ENCODE measurements at regions of chr9 and their contacts with region 1.

Region 1: DNA sequence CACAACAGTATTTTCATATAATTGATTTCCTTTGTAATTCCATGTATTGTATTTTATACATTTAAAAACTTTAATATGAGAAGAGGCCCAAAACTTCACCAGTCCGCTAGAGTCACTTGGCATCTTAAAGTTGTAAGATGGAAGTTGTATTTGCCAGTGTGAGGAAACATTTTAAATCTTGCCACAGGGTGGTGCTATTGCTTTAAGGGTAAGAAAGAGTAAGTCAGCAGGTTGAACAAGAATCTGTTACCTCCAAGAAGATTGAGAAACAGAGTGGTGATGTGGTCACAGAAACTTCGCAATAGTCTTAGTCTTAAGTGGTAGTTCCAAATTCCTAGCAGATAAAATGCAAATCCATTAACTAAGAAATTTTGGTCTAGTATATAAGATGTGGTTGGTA is 39.8 kb upstream of the RANBP6 start:
- DNase-seq: peak; percentile 58
- ATAC-seq: peak; percentile 84
- H3K4me3 ChIP-seq: no peak overlapping the region
- H3K27ac ChIP-seq: no peak overlapping the region
- H3K4me1 ChIP-seq: peaks cover 19% of the 10 kb centered on the region
- H3K27me3 ChIP-seq: no peaks in the 10 kb centered on the region
- CTCF ChIP-seq: peak; percentile 51 to 79 (median 64); a peak in 5 of 6 replicates
- EP300 ChIP-seq: no peak
- POLR2A ChIP-seq: no peak
- RAD21 ChIP-seq: peak; percentile 96

Region 2: DNA sequence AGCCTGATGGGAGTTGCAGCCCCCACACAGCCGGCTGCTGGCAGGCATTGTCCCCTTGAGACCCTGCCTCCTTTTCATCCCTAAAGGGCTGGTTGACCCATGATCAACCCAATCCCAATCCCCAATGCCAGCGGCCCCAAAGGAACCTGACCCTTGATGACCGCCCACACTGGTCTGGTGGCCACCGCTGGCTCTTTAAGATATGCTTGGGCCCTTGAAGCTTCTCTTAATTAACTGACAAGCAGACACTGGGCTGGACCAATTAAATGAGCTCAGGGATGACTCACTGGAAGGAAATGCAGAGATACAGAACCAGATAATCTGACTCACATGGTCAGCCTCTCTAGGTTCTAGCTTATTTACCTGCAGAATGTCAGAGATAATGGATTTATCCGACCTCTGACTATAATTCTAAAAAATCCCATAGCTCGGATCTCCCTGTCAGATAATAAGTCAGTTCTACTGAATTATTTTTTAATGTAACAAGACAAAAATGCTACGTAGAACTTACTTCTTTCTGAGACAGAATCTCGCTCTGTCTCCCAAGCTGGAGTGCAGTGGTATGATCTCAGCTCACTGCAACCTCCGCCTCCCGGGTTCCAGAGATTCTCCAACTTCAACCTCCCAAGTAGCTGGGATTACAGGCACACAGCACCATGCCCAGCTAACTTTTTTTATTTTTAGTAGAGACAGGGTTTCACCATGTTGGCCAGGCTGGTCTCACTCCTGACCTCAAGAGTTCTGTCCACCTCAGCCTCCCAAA is 175.6 kb before region 1 on chr9:
- CTCF ChIA-PET with region 1: interaction called, 288 read pairs
- POLR2A ChIA-PET with region 1: no interaction called
- RAD21 ChIA-PET with region 1: interaction called, 121 read pairs
- SMC1A ChIA-PET with region 1: interaction called, 174 read pairs
- in situ Hi-C with region 1: no loop called
- intact Hi-C with region 1: no loop called
- DNase-seq: no peak
- ATAC-seq: no peak
- H3K4me3 ChIP-seq: no peak overlapping the region
- H3K27ac ChIP-seq: no peak overlapping the region
- H3K4me1 ChIP-seq: peaks cover 5% of the 10 kb centered on the region; the same call in 1 of the 2 replicates
- H3K27me3 ChIP-seq: no peaks in the 10 kb centered on the region
- CTCF ChIP-seq: no peak
- EP300 ChIP-seq: no peak
- POLR2A ChIP-seq: no peak
- RAD21 ChIP-seq: no peak

Region 3: DNA sequence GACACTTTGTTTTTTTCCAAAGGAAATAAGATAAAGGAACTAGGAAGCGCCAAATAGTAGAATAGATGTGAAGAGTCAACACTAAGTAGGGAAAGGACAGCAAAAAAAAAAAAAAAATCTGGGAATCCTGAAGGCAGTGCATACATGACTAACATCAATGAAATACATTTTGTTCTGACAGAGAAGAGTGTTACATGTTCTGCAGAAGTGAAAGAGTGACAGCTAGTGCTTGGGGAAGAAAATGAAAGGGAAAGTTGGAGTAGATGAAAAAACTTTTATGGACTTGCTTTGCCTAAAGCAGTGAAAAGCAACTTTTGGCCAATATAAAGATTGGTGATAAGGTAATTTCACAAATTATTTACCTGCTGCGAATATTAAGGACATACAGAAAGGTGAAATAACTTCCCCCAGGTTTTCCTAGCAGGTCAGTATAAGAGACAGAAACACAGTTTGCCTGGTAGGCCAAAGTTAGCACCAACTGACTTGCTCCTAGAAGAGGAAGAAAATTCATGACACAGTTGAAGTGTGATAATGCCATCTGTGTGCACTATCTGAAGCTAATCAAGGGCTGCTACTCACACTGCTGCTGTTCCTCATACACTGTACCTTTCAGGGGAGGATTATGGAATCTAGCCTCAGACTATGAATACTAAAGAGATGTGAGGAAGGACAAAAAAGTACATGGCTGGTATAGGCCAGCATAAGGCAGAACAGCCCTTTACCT is 78.4 kb before region 1 on chr9:
- CTCF ChIA-PET with region 1: interaction called, 35 read pairs
- POLR2A ChIA-PET with region 1: no interaction called
- RAD21 ChIA-PET with region 1: interaction called, 18 read pairs
- SMC1A ChIA-PET with region 1: interaction called, 20 read pairs
- in situ Hi-C with region 1: no loop called
- intact Hi-C with region 1: no loop called
- DNase-seq: peak; percentile 11
- ATAC-seq: peak; percentile 88
- H3K4me3 ChIP-seq: no peak overlapping the region
- H3K27ac ChIP-seq: peak overlapping the region; percentile 57
- H3K4me1 ChIP-seq: peaks cover 4% of the 10 kb centered on the region; the same call in 1 of the 2 replicates
- H3K27me3 ChIP-seq: no peaks in the 10 kb centered on the region
- CTCF ChIP-seq: peak; percentile 32 to 68 (median 36); a peak in 4 of 6 replicates
- EP300 ChIP-seq: no peak
- POLR2A ChIP-seq: no peak
- RAD21 ChIP-seq: peak; percentile 70

Region 4: GRCh38 chr9:6008169-6008979 is 46.8 kb before region 1 on chr9:
- CTCF ChIA-PET with region 1: interaction called, 11 read pairs
- POLR2A ChIA-PET with region 1: no interaction called
- RAD21 ChIA-PET with region 1: interaction called, 26 read pairs
- SMC1A ChIA-PET with region 1: interaction called, 6 read pairs
- in situ Hi-C with region 1: no loop called
- intact Hi-C with region 1: no loop called
- DNase-seq: peak; percentile 88
- ATAC-seq: peak; percentile 74
- H3K4me3 ChIP-seq: peak overlapping the region; percentile 82
- H3K27ac ChIP-seq: peak overlapping the region; percentile 66
- H3K4me1 ChIP-seq: peaks cover 12% of the 10 kb centered on the region
- H3K27me3 ChIP-seq: no peaks in the 10 kb centered on the region
- CTCF ChIP-seq: no peak
- EP300 ChIP-seq: no peak
- POLR2A ChIP-seq: peak; percentile 55
- RAD21 ChIP-seq: no peak

Region 5: DNA sequence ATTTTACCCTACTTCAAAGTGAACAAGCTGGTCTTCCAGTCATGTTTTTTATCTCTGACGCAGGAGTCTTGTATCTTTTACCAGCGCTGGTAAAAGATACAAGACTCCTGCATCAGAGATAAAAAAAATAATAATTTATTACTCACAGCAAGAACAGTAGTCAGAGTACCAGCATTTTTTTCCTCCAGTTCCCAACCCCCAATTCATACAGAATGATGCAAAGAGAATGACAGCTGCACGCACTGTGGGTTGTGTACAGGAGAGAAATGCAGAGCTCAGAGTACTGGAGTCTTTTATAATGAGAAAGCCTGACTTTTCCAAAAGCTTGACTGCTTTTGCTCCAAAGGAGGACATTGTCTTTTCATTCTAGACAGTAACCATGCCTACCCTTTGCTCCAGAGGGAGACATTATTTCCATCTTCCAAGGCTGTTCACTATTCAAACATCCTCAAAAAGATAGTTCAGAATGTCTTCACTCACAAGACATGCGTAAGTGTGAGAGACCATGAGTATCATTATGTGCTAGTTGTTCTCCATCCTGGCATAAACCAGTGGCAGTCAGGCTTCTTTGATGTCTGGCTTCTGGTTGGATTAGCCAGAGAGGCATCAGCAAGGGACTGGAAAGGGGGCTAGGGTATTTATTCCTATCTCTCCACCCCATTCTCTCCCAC is 25.5 kb before region 1 on chr9:
- CTCF ChIA-PET with region 1: interaction called, 33 read pairs
- POLR2A ChIA-PET with region 1: no interaction called
- RAD21 ChIA-PET with region 1: interaction called, 11 read pairs
- SMC1A ChIA-PET with region 1: interaction called, 3 read pairs
- in situ Hi-C with region 1: no loop called
- intact Hi-C with region 1: no loop called
- DNase-seq: no peak
- ATAC-seq: no peak; the same call in 1 of the 3 replicates
- H3K4me3 ChIP-seq: no peak overlapping the region
- H3K27ac ChIP-seq: no peak overlapping the region
- H3K4me1 ChIP-seq: no peaks in the 10 kb centered on the region
- H3K27me3 ChIP-seq: no peaks in the 10 kb centered on the region
- CTCF ChIP-seq: no peak
- EP300 ChIP-seq: no peak
- POLR2A ChIP-seq: no peak
- RAD21 ChIP-seq: no peak

Region 6: DNA sequence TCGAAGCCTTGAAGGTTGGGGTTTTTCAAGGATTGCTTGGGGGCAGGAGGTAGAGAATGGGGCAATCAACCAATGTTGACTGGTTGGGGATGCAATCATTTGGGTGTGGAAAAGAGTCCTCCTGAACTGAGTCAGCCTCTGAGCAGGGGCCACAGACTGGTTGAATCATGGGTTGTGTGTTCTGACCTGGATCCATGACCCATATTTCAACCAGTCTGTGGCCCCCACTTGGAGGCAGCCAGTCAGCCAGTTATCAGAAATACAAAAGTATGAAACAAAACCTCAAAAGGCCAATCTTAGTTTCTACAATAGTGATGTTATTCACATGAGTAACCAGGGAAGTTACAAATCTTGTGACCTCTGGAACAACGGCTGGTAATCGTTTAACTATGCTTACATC is 41.6 kb after region 1 on chr9:
- CTCF ChIA-PET with region 1: no interaction called
- POLR2A ChIA-PET with region 1: no interaction called
- RAD21 ChIA-PET with region 1: no interaction called
- SMC1A ChIA-PET with region 1: no interaction called
- in situ Hi-C with region 1: no loop called
- intact Hi-C with region 1: no loop called
- DNase-seq: no peak
- ATAC-seq: peak; percentile 47; the same call in 2 of the 3 replicates
- H3K4me3 ChIP-seq: no peak overlapping the region
- H3K27ac ChIP-seq: no peak overlapping the region
- H3K4me1 ChIP-seq: no peaks in the 10 kb centered on the region
- H3K27me3 ChIP-seq: no peaks in the 10 kb centered on the region
- CTCF ChIP-seq: no peak
- EP300 ChIP-seq: no peak
- POLR2A ChIP-seq: no peak
- RAD21 ChIP-seq: no peak

Region 7: DNA sequence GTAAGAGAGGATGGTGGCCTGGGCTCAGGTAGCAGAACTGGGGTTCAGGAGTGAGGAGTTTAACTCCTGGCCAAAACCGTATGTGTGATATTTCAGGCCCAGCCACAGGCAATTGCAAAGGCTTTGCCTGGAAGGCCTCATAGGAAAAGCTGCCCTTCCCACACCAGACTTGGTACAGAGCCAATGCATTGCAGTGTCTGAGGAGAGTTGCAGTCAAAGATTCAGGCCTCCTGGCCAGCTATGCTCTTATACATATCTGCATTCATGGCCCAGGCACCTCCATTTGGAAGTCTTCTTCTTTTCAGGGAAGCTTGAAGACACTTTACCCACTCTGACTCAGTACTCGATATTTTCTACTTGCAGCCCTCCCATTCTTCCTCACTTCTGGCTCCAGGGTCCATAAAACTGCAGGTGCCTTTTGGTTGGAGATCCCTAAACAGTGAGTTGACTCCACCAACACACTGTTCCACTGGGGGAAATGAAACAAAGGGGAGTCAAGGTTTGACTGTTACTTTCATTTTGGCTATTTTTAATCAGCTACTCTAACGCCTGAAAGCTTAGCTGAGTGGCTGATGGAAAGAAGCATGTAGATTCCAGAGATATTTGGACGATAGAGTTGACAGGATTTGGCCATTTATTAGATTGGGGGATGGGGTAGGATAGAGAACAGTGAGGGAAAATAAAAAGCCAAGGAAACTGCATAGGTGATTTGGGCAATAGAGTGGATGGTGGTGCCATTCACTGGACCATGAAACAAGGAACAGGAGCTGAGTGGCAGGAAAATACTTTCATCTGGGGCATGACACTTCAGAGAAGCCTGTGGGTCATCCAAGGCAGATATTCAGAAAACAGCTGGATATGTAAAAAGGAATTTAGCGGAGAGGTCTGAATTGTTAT is 129.8 kb after region 1 on chr9:
- CTCF ChIA-PET with region 1: interaction called, 5 read pairs
- POLR2A ChIA-PET with region 1: no interaction called
- RAD21 ChIA-PET with region 1: no interaction called
- SMC1A ChIA-PET with region 1: interaction called, 4 read pairs
- in situ Hi-C with region 1: no loop called
- intact Hi-C with region 1: loop called (anchors 5 kb)
- DNase-seq: peak; percentile 61
- ATAC-seq: peak; percentile 97
- H3K4me3 ChIP-seq: peak overlapping the region; percentile 46; the same call in 1 of the 2 replicates
- H3K27ac ChIP-seq: peak overlapping the region; percentile 48
- H3K4me1 ChIP-seq: peaks cover 33% of the 10 kb centered on the region
- H3K27me3 ChIP-seq: no peaks in the 10 kb centered on the region
- CTCF ChIP-seq: no peak
- EP300 ChIP-seq: peak in 1 of 2 experiments; percentile 82; a peak in 1 of 4 replicates
- POLR2A ChIP-seq: no peak
- RAD21 ChIP-seq: peak; percentile 8; the same call in 1 of the 2 replicates

Region 8: GRCh38 chr9:6214434-6214833 is 159.2 kb after region 1 on chr9:
- CTCF ChIA-PET with region 1: no interaction called
- POLR2A ChIA-PET with region 1: no interaction called
- RAD21 ChIA-PET with region 1: no interaction called
- SMC1A ChIA-PET with region 1: no interaction called
- in situ Hi-C with region 1: no loop called
- intact Hi-C with region 1: no loop called
- DNase-seq: no peak
- ATAC-seq: no peak
- H3K4me3 ChIP-seq: no peak overlapping the region
- H3K27ac ChIP-seq: no peak overlapping the region
- H3K4me1 ChIP-seq: no peaks in the 10 kb centered on the region
- H3K27me3 ChIP-seq: no peaks in the 10 kb centered on the region
- CTCF ChIP-seq: no peak
- EP300 ChIP-seq: no peak
- POLR2A ChIP-seq: no peak
- RAD21 ChIP-seq: no peak